Motor neuron (in vitro differentiated cells): ENCODE measurements at regions of chr2 and their contacts with region 1.

Region 1: GRCh38 chr2:178914259-178914849 is 107.1 kb upstream of the TTN start:
- ATAC-seq: peak; percentile 45 to 94 (median 74)
- H3K4me3 ChIP-seq: no peak overlapping the region
- H3K27ac ChIP-seq: no peak overlapping the region
- H3K4me1 ChIP-seq: peaks cover 4 to 19% of the 10 kb centered on the region in 2 donors

Region 2: DNA sequence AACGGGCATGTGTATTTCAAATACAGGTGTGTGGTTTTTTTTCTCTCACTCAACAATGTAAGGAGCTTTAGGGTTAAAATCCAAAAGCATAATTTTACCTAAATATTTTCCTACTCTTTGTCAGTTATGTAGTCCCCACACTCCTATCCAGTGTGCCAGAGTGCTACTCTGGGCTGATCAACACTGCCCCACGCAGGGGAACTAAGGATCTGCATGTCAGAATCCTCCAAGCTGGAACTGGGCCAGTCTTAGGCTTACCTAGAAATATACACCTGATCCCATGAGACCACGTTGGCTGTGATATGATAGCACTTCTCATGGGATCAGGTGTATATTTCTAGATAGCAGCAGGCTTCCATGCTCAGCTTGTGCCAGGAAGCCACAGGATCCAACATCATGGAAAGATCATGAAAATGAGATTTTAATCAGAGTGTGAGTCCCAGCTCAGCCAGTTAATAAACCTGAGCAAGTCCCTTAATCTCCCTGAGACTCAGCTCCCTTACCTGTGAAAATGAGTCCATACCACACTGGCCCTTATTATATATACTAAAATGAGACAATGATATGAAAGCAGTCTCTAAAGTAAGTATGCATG is 105.9 kb after region 1 on chr2:
- in situ Hi-C with region 1: loop called in 1 of 9 experiments (anchors 25 kb)
- ATAC-seq: peak in 3 of 8 experiments; percentile 71 to 89 (median 81)
- H3K4me3 ChIP-seq: no peak overlapping the region
- H3K27ac ChIP-seq: no peak overlapping the region
- H3K4me1 ChIP-seq: no peaks in the 10 kb centered on the region